Calu3 (cell line): ENCODE measurements at regions of chr11 and their contacts with region 1.

Region 1: DNA sequence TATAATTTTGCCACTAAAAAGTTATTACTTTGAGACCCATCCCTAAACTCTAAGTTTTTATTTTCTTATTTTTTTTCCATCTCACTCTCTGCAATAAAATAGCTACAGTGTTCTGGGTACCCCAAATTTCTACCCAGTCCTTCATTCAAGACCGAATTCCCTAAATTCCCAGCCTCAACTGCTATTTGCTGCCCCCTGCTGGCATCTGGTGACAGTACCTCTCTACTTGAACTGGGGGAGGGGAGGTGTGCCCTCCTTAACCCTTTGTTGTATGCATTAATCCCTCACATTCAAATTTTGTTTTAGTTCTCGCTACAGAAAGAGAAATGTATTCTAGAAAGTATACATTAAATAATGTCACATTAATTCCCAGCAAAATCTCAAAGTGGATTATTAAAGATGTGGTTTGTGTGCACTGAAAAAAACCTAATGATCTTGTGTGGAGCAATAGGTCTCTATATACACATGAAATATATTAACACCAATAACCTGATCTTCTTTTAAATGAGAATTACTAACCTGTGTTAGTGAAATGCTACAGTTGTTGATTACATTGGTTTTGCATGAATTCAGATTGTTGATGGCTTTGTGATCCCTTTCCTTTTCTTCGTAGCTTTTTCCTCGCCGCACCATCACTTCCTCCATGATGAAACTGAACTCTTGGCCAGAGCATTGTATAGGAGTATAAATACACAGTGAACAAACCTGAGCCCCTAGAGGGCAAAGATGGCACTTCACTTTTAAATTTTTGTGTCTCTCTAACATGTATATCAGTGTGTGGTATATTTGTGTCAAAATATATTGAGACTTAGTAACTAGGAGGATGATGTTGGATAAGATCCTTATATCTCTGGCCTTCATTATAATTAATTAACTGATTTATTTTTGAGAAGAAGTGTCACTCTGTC is 590.0 kb downstream of the METTL15 start:
- DNase-seq: peak; percentile 68
- H3K4me3 Mint-ChIP-seq: no peak overlapping the region
- H3K27ac Mint-ChIP-seq: peak overlapping the region; percentile 81
- H3K4me1 Mint-ChIP-seq: peaks cover 74% of the 10 kb centered on the region
- H3K27me3 Mint-ChIP-seq: no peaks in the 10 kb centered on the region
- CTCF ChIP-seq: peak; percentile 90

Region 2: DNA sequence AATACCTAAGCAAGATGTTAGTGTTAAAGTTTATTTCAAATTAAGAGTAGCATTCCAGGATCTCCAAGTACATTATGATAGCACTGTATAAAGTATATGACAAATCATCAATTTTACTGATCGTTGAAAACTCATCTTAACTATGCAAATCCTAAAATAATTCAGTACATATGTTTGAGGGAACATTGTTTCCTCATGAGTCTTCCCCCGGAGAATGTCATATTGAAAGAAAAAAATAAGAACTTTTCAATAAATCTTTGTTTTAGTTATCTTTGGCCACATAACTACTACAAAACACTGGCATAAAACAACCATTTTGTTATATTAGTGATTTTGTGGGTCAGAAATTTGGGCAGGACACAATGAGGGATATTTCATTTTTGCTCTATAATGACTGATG is 454.6 kb before region 1 on chr11:
- CTCF ChIA-PET with region 1: no interaction called
- intact Hi-C with region 1: no loop called
- DNase-seq: no peak
- H3K4me3 Mint-ChIP-seq: no peak overlapping the region
- H3K27ac Mint-ChIP-seq: no peak overlapping the region
- H3K4me1 Mint-ChIP-seq: no peaks in the 10 kb centered on the region
- H3K27me3 Mint-ChIP-seq: no peaks in the 10 kb centered on the region
- CTCF ChIP-seq: no peak

Region 3: DNA sequence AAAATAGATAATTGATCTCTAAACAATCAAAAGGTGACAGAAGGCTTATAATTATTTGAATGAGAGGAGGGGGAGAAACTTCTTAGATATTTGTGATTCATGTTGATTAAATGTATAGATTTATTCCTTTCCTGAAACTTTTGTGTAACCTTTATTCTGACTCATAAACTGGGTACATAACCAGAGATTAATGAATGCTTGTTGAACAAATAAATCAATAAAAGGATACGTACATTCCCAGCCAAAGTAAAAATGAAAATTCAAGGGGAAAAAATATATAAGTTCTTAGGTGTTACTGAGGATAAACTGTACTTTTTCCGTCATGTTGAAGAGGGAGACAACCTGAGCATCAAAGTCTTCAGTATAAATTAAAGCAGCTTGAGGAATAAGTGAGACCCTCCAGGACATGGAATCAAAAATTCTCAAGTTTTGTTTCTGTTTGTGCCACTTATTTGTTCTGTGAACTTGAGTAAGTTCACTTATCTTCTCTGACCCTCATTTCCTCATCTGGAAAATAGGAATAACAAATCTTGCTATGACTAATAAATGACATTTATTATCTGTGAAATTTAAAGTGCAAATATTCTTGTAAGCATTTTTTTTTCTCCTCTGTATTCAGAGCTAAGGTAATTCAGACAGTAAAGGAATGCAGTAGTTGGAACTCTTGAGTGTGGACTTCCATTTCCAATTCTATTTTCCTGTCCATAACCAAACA is 394.5 kb before region 1 on chr11:
- CTCF ChIA-PET with region 1: no interaction called
- intact Hi-C with region 1: loop called (anchors 5 kb)
- DNase-seq: no peak
- H3K4me3 Mint-ChIP-seq: peak overlapping the region; percentile 30
- H3K27ac Mint-ChIP-seq: peak overlapping the region; percentile 67
- H3K4me1 Mint-ChIP-seq: no peaks in the 10 kb centered on the region
- H3K27me3 Mint-ChIP-seq: no peaks in the 10 kb centered on the region
- CTCF ChIP-seq: no peak

Region 4: DNA sequence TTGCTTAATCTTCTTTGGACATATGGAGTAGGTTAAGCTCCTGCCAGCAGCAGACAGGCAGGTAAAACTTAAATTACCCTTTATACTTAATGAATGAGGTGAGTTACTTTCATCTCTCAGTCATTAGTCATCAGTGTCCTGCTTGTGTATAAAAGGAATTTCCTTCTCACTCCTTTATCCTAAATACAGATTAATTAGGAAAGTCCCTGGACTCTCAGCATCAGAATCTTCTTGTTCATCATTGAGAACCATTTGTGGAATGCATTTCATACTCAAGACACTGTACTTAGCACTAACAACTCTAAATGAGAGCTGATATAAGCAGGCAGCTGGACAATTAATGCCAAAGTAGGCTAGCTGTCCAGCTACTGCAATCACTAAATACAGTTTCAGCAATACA is 40.4 kb after region 1 on chr11:
- CTCF ChIA-PET with region 1: interaction called, 3 read pairs
- intact Hi-C with region 1: loop called (anchors 5 kb)
- DNase-seq: no peak
- H3K4me3 Mint-ChIP-seq: no peak overlapping the region
- H3K27ac Mint-ChIP-seq: peak overlapping the region; percentile 71
- H3K4me1 Mint-ChIP-seq: peaks cover 76% of the 10 kb centered on the region
- H3K27me3 Mint-ChIP-seq: no peaks in the 10 kb centered on the region
- CTCF ChIP-seq: no peak

Region 5: GRCh38 chr11:28836285-28837081 is 138.3 kb after region 1 on chr11:
- CTCF ChIA-PET with region 1: interaction called, 4 read pairs
- intact Hi-C with region 1: loop called (anchors 1 kb)
- DNase-seq: peak; percentile 60
- H3K4me3 Mint-ChIP-seq: peak overlapping the region; percentile 59
- H3K27ac Mint-ChIP-seq: peak overlapping the region; percentile 96
- H3K4me1 Mint-ChIP-seq: peaks cover 55% of the 10 kb centered on the region
- H3K27me3 Mint-ChIP-seq: no peaks in the 10 kb centered on the region
- CTCF ChIP-seq: no peak

Region 6: DNA sequence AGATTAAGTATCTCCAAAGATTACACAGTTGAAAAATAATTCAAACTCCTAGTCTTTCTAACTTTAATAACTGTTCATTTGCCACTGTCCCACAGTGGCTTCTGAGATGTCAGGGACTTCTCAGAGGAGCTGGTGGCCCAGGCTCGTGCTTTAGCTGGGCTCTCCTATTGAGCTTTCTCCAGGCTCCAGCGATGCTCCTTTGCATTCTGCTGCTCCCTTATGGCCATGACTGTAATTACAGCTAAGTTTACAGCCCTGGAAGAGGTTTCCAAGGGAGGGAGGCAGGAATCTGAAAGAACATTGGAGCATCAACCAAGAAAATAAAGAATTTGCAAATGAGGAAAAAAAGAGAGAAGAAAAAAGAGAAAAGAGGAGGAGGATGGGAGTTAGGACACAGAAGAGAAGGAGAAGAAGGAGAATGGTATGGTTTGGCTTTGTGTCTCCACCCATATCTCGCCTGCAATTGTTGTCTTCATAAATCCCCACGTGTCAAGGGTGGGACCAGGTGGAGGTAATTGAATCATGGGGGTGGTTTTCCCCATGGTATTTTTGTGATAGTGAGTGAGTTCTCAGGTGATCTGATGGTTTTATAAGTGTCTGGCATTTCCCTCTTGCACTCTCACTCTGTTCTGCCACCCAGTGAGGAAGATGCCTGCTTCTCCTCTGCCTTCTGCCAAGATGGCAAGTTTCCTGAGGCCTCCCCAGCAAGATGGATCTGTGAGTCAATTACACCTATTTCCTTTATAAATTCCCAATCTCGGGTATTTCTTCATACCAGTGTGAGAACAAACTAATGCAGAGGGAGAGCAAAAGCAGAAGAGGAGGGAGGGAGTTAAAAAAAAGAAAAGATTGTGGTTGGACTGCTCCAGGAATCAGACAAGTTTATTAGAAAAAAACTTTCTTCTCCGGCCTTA is 461.6 kb after region 1 on chr11:
- CTCF ChIA-PET with region 1: interaction called, 7 read pairs
- intact Hi-C with region 1: loop called (anchors 10 kb)
- DNase-seq: peak; percentile 71
- H3K4me3 Mint-ChIP-seq: no peak overlapping the region
- H3K27ac Mint-ChIP-seq: no peak overlapping the region
- H3K4me1 Mint-ChIP-seq: peaks cover 15% of the 10 kb centered on the region
- H3K27me3 Mint-ChIP-seq: no peaks in the 10 kb centered on the region
- CTCF ChIP-seq: peak; percentile 78